ENCODE measurements at regions of chr19 and their contacts with region 1.

Region 1: GRCh38 chr19:45886427-45887199 is 672 bp upstream of the IRF2BP1 start:
- DNase-seq: peak; percentile 87 to 93 (median 92)
- H3K4me3 ChIP-seq: peak overlapping the region; percentile 51
- H3K27ac ChIP-seq: peak overlapping the region; percentile 86 to 88
- H3K4me1 ChIP-seq: peaks cover 23% of the 10 kb centered on the region
- H3K27me3 ChIP-seq: no peaks in the 10 kb centered on the region
- CTCF ChIP-seq: peak in 1 of 3 donors; percentile 5
- EP300 ChIP-seq: no peak
- POLR2A ChIP-seq: peak; percentile 84

Region 2: DNA sequence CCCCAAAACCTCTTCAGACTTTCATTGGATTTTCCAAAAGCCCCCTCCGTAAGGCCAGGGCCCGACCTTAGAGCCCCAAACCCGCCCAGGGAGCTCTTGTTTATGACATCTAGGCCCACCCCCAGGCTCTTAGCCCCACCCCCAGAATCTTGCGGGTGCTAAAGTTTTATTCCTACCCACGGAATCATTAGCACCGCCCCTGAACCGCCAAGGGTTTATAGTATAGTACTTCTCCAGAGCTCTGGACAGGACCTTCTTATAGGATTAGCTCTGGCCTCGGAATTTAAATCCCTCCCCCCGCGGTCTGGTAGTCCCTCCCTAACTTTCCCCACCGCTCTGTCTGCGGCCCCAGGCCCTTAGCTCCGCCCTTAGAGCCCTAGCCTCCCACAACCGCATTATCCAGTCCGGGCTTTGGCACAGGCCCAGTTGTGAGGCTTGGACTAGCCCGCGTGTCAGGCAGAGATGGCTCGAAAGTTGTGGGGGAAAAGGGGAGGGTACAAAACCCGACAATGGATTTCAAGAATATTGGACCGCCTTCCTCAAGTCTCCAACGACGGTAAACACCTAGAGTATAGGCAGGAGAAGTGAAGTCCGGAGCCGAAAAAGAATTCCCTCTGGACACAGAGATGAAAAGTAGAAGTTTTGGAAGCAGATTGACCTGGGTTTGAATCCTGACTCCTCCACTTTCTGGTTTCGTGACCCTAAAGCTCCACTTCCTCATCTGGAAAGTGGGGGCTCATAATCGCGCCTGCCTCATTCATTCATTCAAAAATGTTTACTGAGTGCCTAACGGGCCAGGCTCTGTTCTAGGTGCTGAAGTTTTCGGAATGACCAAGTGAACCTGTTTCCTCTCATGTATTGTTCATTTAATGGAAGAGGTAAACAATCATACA is 240.6 kb before region 1 on chr19:
- intact Hi-C with region 1: no loop called
- DNase-seq: peak in 4 of 5 donors; percentile 30 to 60 (median 41)
- H3K4me3 ChIP-seq: peak overlapping the region; percentile 2
- H3K27ac ChIP-seq: no peak overlapping the region
- H3K4me1 ChIP-seq: peaks cover 4% of the 10 kb centered on the region
- H3K27me3 ChIP-seq: peaks cover 3% of the 10 kb centered on the region
- CTCF ChIP-seq: no peak
- EP300 ChIP-seq: no peak
- POLR2A ChIP-seq: no peak

Region 3: DNA sequence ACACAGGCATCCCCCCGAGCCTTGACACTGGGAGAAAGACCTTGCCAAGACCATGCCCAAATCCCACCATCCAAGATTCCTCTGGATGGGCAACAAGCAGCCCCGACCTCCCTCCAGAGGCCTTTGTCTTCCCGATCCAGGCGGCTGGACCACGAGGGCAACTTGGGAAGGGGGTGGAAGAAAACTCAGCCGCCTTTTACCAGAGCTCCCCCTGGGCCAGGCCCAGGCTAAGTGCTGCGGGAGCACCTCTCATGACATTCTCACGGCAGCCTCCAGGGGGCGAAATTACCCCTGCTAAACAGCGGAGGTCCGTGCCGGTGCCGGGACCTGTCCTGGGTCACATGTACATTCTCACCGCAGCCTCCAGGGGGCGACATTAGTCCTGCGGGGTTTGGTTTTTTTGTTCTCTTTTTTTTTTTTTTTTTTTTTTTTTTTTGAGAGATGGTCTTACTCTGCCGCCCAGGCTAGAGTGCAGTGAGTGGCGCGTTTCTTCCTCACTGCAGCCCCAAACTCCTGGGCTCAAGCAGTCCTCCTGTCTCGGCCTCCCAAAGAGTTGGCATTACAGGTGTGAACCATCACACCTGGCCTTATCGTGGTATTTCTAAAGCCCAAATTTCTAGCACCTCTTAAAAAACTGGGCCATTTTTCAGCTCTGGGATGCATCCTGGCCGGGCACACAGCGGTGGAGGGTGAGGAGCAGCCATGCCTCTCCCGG is 69.4 kb before region 1 on chr19:
- intact Hi-C with region 1: loop called in 1 of 4 experiments (anchors 10 kb)
- DNase-seq: peak; percentile 90 to 96 (median 94)
- H3K4me3 ChIP-seq: no peak overlapping the region
- H3K27ac ChIP-seq: no peak overlapping the region
- H3K4me1 ChIP-seq: peaks cover 5% of the 10 kb centered on the region
- H3K27me3 ChIP-seq: no peaks in the 10 kb centered on the region
- CTCF ChIP-seq: peak; percentile 90 to 98 (median 90)
- EP300 ChIP-seq: no peak
- POLR2A ChIP-seq: no peak